CD4-positive, alpha-beta memory T cell (primary cell): ENCODE measurements at regions of chr12 and their contacts with region 1.

Region 1: GRCh38 chr12:122225683-122226407 is at the start of gene DIABLO:
- DNase-seq: peak; percentile 100
- H3K4me3 ChIP-seq: peak within 1 kb of the TSS; percentile 63 to 76
- H3K4me3 Mint-ChIP-seq: peak within 1 kb of the TSS; percentile 88 to 93 (median 91)
- H3K27ac ChIP-seq: peak within 1 kb of the TSS; percentile 99
- H3K27ac Mint-ChIP-seq: peak within 1 kb of the TSS; percentile 90 to 98 (median 96)
- H3K4me1 ChIP-seq: peaks cover 36% of the 10 kb centered on the region
- H3K4me1 Mint-ChIP-seq: peaks cover 25 to 56% (median 39%) of the 10 kb centered on the region in 4 donors
- H3K27me3 ChIP-seq: no peaks in the 10 kb centered on the region
- H3K27me3 Mint-ChIP-seq: no peaks in the 10 kb centered on the region
- total RNA-seq, gene DIABLO: 40.0 to 44.1 TPM

Region 2: DNA sequence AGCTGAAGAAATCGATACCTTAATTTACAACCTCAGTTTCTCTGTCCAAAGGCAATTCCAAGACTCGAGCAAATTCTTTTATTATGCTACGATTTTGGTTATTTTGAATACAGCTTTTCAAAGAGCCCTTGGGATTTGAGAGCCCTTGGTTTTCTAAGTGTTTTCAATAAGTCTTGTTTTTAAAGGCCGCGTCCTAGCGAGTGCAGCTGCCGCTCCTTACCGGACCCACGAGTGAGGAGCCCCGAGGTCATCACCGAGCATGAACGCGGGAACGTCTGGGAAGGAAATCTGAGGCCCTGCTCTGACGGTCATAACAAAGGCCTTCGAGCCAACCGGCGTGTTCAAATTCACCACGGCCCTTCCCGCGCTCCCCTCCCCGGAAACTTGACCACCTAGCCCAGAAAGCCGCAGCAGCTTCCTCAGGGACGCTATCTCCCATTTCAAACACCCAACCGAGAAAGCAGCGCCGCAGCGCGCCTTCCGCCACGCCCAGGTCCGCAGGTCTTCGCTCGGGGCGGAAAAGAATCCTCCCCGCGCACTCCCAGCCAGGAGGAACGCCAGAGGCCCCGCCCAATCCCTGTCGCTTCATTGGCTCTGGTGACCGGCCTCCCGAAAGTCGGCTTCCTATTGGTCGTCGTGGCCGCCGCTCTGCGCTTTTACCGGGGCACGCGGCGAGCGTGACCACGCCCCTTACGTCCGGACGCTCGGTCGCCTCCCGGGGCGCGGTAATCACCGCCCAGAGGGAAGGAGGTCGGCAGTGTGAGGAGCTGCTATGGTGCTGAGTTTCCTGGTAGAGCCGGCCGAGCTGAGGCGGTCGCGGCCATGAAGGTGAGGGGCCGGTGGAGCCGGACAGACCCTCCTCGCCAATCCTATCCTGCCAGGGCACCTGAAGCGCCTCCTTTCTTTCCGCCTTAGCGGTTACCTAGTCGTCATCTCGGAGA is 826.2 kb before region 1 on chr12 and contains the start of gene RNF34:
- CTCF ChIA-PET with region 1: no interaction called
- POLR2A ChIA-PET with region 1: interaction called, 3 read pairs
- intact Hi-C with region 1: loop called (anchors 10 kb)
- DNase-seq: peak; percentile 96 to 98 (median 97)
- H3K4me3 ChIP-seq: peak within 1 kb of the TSS; percentile 25 to 78
- H3K4me3 Mint-ChIP-seq: peak within 1 kb of the TSS; percentile 89 to 99 (median 94)
- H3K27ac ChIP-seq: peak within 1 kb of the TSS; percentile 87
- H3K27ac Mint-ChIP-seq: peak within 1 kb of the TSS; percentile 95 to 98 (median 96)
- H3K4me1 ChIP-seq: peaks cover 42% of the 10 kb centered on the region
- H3K4me1 Mint-ChIP-seq: peaks cover 21 to 47% (median 32%) of the 10 kb centered on the region in 4 donors
- H3K27me3 ChIP-seq: no peaks in the 10 kb centered on the region
- H3K27me3 Mint-ChIP-seq: no peaks in the 10 kb centered on the region
- total RNA-seq, gene RNF34: 88.6 to 95.3 TPM

Region 3: GRCh38 chr12:121802846-121803630 is 422.8 kb before region 1 on chr12:
- CTCF ChIA-PET with region 1: no interaction called
- POLR2A ChIA-PET with region 1: interaction called, 10 read pairs
- intact Hi-C with region 1: no loop called
- DNase-seq: peak; percentile 90 to 93 (median 91)
- H3K4me3 ChIP-seq: peak overlapping the region; percentile 98
- H3K4me3 Mint-ChIP-seq: peak overlapping the region; percentile 92 to 99 (median 98)
- H3K27ac ChIP-seq: peak overlapping the region; percentile 91
- H3K27ac Mint-ChIP-seq: peak overlapping the region; percentile 98 to 99 (median 99)
- H3K4me1 ChIP-seq: peaks cover 37% of the 10 kb centered on the region
- H3K4me1 Mint-ChIP-seq: peaks cover 21 to 60% (median 35%) of the 10 kb centered on the region in 4 donors
- H3K27me3 ChIP-seq: no peaks in the 10 kb centered on the region
- H3K27me3 Mint-ChIP-seq: no peaks in the 10 kb centered on the region

Region 4: DNA sequence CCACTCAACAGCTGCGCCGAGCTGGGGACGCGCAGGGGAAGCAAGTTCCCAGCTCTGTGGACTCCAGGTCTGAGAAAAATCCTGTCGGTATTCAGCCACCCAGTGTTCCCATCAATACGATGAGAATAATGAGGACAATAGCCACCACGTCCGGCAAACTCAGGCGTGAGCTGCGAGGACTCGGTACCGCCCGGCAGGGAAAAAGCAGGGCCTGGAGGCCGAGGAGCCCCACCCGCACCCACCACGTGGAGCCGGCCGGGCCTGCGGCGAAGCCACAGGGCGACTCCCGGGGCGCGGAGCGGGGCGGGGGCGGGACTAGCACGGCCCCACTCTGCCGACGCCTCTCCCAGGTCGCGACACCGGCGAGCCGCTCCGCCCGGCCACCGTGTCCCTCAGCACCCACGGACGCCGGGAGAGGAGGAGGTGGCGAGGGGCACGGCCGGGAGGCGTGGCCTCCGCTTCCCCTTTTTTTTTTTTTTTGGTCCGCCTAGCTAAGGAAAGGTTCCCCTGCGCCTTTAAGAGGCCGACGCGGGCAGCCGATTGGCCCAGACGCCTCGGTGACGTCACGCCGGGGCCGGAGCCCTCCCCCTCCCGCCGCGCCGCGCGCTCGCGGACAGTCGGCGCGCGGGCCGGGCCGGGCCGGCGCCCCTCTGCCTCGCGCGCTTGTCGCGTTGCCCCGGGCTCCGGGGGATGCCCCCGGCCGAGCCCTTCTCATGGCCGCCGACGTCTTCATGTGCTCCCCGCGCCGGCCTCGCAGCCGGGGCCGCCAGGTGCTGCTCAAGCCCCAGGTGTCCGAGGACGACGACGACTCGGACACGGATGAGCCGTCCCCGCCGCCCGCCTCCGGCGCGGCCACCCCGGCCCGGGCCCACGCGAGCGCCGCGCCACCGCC is 147.5 kb before region 1 on chr12 and contains the start of gene MLXIP:
- CTCF ChIA-PET with region 1: no interaction called
- POLR2A ChIA-PET with region 1: interaction called, 4 read pairs
- intact Hi-C with region 1: loop called (anchors 1 kb)
- DNase-seq: peak; percentile 83 to 87 (median 85)
- H3K4me3 ChIP-seq: peak within 1 kb of the TSS; percentile 82 to 92
- H3K4me3 Mint-ChIP-seq: peak within 1 kb of the TSS; percentile 84 to 98 (median 95)
- H3K27ac ChIP-seq: peak within 1 kb of the TSS; percentile 69
- H3K27ac Mint-ChIP-seq: peak within 1 kb of the TSS; percentile 77 to 99 (median 95)
- H3K4me1 ChIP-seq: peaks cover 54% of the 10 kb centered on the region
- H3K4me1 Mint-ChIP-seq: peaks cover 26 to 46% (median 35%) of the 10 kb centered on the region in 4 donors
- H3K27me3 ChIP-seq: no peaks in the 10 kb centered on the region
- H3K27me3 Mint-ChIP-seq: no peaks in the 10 kb centered on the region
- total RNA-seq, gene MLXIP: 79.5 to 88.1 TPM

Region 5: DNA sequence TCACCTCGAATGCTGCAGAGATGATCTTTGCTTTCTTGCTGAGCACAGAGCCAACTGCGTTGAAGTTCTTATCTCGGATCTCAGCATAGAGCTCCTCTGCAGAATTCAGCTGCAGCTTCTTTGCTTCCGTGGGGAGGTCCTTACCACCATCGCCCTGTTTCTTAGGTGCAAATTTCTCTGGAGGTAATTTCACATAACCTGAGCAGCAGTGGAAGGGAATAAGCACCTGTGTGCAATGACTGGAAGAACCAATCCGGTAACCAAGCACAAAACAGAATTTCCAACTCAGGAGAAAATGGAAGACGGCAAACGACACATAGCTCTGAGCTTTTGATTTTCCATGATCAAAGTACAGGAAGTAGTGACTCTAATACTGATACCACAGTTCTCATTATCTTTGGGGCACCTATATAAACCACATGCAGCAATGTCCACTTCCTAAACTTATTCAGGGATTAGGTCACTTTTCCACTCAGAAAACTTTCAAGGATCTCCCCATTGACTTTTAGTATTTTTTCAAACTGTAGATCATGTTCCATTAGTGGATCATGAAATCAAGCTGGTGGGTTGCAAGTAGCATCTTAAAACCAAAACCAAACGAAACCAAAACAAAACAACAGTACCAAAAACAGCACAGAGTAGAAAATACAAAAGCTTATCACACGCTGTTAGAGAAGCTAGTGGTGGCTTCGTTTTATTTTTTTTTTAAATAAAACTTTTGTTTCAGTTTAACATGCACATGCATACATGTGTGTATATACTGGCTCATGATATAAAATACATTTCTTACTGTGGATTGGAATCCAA is 18.9 kb after region 1 on chr12:
- CTCF ChIA-PET with region 1: interaction called, 28 read pairs
- POLR2A ChIA-PET with region 1: interaction called, 155 read pairs
- intact Hi-C with region 1: loop called (anchors 1 kb)
- DNase-seq: peak; percentile 64 to 76 (median 74)
- H3K4me3 ChIP-seq: peak overlapping the region; percentile 63 to 92
- H3K4me3 Mint-ChIP-seq: peak overlapping the region; percentile 90 to 95 (median 93)
- H3K27ac ChIP-seq: peak overlapping the region; percentile 67
- H3K27ac Mint-ChIP-seq: peak overlapping the region; percentile 94 to 97 (median 95)
- H3K4me1 ChIP-seq: peaks cover 46% of the 10 kb centered on the region
- H3K4me1 Mint-ChIP-seq: peaks cover 25 to 50% (median 38%) of the 10 kb centered on the region in 4 donors
- H3K27me3 ChIP-seq: no peaks in the 10 kb centered on the region
- H3K27me3 Mint-ChIP-seq: no peaks in the 10 kb centered on the region

Region 6: DNA sequence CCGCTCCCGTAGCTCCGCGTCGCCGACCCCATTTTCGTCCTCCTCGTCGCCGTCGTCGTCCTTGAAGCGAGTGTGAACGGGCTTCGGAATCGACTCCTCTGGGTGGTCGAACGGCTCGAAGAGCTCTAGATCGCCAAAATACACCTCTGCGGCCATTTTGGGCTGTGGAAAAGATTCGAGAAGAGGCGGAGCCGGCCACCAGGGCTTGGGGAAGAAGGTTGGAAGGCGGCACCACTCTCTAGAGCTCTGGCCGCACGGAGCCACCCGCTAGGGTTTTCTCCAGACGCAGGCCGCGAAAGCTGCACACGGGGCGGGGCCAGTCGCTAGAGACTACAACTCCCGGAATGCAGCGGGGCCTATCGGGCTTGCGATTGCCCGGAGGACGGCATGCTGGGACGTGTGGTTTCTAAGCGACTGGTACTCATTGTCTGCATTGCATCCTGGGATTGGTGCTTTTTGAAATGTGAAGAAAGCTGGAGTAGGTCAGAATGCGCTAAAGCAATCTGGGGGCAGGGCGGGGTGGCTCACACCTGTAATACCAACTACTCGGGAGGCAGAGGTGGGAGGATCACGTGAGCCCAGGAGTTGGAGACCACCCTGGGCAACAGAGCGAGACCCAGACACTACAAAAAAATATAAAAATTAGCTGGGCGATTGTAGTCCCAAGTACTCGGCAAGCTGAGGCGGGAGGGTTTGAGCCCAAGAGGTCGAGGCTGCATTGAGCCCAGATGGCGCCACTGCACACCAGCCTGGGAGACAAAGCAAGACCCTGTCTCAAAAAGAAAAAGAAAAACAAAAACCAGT is 275.0 kb after region 1 on chr12 and contains the start of gene ZCCHC8:
- CTCF ChIA-PET with region 1: no interaction called
- POLR2A ChIA-PET with region 1: interaction called, 10 read pairs
- intact Hi-C with region 1: loop called (anchors 1 kb)
- DNase-seq: peak; percentile 93 to 98 (median 95)
- H3K4me3 ChIP-seq: peak within 1 kb of the TSS; percentile 55 to 80
- H3K4me3 Mint-ChIP-seq: peak within 1 kb of the TSS; percentile 90 to 98 (median 98)
- H3K27ac ChIP-seq: peak within 1 kb of the TSS; percentile 92
- H3K27ac Mint-ChIP-seq: peak within 1 kb of the TSS; percentile 85 to 99 (median 95)
- H3K4me1 ChIP-seq: peaks cover 44% of the 10 kb centered on the region
- H3K4me1 Mint-ChIP-seq: peaks cover 25 to 50% (median 37%) of the 10 kb centered on the region in 4 donors
- H3K27me3 ChIP-seq: no peaks in the 10 kb centered on the region
- H3K27me3 Mint-ChIP-seq: no peaks in the 10 kb centered on the region
- total RNA-seq, gene ZCCHC8: 52.0 to 59.9 TPM

Region 7: GRCh38 chr12:122974274-122974891 is 748.5 kb after region 1 on chr12:
- CTCF ChIA-PET with region 1: no interaction called
- POLR2A ChIA-PET with region 1: no interaction called
- intact Hi-C with region 1: loop called (anchors 2 kb)
- DNase-seq: peak; percentile 97 to 99 (median 98)
- H3K4me3 ChIP-seq: peak overlapping the region; percentile 71 to 100
- H3K4me3 Mint-ChIP-seq: peak overlapping the region; percentile 89 to 99 (median 98)
- H3K27ac ChIP-seq: peak overlapping the region; percentile 98
- H3K27ac Mint-ChIP-seq: peak overlapping the region; percentile 98 to 100 (median 99)
- H3K4me1 ChIP-seq: peaks cover 41% of the 10 kb centered on the region
- H3K4me1 Mint-ChIP-seq: peaks cover 10 to 49% (median 30%) of the 10 kb centered on the region in 4 donors
- H3K27me3 ChIP-seq: no peaks in the 10 kb centered on the region
- H3K27me3 Mint-ChIP-seq: no peaks in the 10 kb centered on the region